GM10248 (cell line): ENCODE measurements at regions of chr6 and their contacts with region 1.

Region 1: DNA sequence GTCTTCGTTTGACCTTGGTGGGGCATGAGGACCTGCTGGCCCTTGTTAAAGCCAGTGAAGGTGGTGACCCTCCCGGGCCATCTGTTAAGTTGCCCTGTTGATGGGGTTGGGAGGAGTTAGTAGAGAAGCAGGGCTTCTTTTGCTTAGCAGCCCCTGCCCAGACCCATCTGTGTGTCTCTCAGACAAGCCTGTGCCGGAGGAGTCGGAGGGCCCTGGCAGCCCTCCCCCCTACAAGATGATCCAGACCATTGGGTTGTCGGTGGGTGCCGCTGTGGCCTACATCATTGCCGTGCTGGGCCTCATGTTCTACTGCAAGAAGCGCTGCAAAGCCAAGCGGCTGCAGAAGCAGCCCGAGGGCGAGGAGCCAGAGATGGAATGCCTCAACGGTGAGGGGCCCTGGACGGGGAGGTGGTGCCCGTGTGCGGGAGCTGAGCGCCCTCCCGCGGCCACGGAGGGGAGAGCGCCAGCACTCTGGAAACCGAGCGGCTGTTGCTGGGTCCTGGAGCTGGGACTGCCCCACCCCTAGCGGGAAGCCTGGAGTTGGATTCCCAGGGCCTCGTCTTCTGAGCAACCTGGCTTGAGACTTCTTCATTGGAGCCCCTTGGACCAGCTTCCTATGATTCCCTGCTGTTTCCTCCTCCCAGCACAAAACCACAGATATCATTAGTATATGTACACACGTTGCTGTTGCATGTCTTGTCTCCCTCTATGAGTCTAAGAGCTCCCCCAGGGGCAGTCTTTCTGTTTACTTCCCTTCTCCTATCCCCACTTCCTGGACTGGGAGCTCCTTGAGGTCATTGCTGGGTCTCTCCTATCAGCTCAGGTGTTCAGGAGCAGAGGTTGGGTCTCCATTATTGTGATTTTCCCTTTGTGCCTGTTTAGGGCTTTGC is 27.6 kb upstream of the SRF start:
- DNase-seq: peak; percentile 94
- CTCF ChIP-seq: peak; percentile 93

Region 2: DNA sequence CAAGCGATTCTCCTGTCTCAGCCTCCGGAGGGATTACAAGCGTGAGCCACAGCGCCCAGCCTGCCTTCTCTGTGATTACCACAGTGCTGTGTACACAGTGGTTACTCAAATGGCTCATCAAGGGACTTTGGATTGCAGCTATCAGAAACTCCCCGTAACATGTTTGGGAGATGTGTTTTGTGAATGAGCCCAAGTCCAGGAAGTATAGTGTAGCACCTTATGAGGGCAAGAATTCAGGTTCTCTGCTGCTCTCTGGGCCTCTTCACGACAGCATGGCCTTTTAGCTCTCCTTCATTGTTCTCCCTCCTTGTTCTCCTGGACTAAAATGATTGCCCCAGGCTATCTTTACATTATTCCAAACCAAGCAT is 298.2 kb before region 1 on chr6:
- CTCF ChIA-PET with region 1: no interaction called
- POLR2A ChIA-PET with region 1: no interaction called
- DNase-seq: no peak
- CTCF ChIP-seq: no peak

Region 3: GRCh38 chr6:42901536-42901957 is 241.9 kb before region 1 on chr6:
- CTCF ChIA-PET with region 1: interaction called, 65 read pairs
- POLR2A ChIA-PET with region 1: no interaction called
- DNase-seq: peak; percentile 58
- CTCF ChIP-seq: peak; percentile 92

Region 4: DNA sequence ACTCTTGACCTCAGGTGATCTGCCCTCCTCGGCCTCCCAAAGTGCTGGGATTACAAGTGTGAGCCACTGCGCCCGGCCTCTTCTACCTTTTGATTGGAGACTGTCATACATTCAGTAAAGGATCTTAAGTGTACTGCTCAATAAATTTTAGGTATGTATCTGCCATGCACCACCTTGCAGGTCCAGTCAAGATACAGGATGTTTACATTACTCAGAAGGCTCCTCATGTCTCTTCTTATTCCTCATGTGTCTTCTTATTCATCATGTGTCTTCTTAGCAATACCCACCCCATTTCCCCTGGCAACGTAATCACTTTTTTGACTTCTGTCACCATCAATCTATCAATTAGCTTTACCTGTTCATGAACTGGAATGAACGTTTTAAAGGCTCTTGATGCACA is 137.6 kb before region 1 on chr6:
- CTCF ChIA-PET with region 1: interaction called, 11 read pairs
- POLR2A ChIA-PET with region 1: no interaction called
- DNase-seq: no peak
- CTCF ChIP-seq: no peak

Region 5: DNA sequence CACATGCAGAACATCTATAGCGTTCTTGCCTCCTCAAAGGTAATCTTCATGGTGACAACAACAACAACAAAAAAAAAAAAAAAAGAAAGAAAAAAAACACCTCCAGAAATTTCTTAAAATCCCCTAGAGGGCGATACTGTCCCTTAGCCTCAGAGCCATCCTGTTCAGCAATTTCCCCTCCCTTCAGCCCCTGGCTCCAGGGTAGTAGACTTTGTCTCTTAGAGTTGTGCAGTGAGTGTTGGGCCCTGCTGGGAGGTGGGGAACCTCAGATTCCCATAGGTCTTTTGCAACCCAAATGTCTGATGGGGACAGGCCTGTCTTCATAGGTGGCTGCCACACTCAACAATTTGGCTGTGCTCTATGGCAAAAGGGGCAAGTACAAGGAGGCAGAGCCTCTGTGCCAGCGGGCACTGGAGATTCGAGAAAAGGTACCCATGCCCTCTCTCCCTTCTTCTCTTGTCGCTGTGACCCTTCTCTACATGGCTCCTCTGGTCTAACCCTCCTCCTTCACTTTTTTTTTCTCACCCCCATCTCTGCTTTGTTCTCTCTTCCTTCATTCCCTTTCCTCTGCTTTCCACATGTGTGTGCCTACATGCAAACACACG is 73.3 kb before region 1 on chr6:
- CTCF ChIA-PET with region 1: interaction called, 19 read pairs
- POLR2A ChIA-PET with region 1: no interaction called
- DNase-seq: peak; percentile 77
- CTCF ChIP-seq: peak; percentile 11

Region 6: DNA sequence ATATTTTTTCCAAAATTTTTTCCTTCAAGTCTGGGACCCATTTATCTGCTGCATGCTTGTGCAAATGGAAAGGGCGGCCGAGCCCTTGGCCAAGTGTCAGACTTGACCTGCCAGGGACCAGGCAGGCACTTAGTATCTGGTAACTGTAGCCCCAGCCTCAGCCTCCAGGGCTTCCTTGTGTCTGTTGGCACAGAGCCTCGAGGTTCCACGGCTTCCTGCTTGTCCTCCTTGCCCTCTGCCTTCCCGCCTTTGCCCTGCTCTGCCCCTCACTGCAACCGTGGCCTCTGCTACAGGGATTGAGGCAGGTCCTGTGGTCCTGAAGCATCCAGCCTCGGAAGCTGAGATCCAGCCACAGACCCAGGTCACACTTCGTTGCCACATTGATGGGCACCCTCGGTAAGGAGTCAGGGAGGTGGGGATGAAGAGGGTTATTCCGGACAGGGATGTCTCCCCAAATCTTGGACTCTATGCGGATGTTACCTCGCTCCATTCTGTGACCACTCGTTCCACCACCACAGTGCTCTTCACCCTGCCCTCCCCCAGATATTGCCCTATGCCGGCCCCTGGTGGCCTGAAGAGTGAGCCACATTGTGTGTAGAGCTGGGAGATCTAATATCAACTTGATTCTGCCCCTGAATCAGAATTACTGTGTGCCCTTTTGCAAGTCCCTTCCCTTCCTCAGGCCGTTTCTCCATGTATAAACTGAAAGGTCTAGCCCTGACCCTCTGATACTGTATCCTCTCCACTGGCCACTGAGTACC is 13.9 kb before region 1 on chr6:
- CTCF ChIA-PET with region 1: interaction called, 41 read pairs
- POLR2A ChIA-PET with region 1: no interaction called
- DNase-seq: peak; percentile 46
- CTCF ChIP-seq: peak; percentile 35

Region 7: GRCh38 chr6:43186019-43186418 is 42.5 kb after region 1 on chr6:
- CTCF ChIA-PET with region 1: no interaction called
- POLR2A ChIA-PET with region 1: no interaction called
- DNase-seq: no peak
- CTCF ChIP-seq: no peak

Region 8: DNA sequence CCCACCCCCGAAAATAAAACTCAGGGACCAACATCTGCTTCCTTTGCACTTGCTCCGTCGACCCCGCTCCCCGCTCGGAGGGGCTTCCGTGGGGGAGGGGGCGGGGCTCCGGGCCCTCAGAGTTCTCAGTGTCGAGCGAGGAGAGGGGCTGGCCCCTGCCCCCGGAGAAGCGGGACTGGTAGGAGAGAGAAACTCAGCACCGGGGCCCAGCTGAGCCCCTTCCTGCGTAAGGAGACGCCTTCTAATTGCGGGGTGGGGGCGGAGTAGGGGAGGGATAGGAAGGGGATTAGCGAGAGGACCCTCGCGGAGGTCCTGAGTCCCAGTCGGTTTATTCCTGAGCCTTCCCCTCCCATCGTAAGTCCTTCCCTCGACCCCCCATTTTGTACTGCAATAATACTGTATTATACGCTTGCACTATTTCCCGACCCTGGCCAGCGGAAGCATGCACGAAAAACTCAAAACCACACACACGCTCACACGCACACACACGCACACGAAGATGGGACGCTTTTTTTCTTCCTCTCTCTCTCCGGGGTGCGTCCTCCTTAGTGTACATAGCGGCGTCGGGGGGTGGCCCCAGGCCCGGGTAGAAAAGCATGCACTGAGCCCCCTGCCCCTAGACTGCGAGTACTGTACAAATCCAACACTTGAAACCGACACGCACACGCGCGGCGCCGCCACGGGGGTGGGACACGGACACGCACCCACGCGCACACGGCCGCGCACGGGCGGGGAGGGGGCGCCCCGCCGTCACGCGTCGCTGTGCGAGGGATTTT is 132.5 kb after region 1 on chr6:
- CTCF ChIA-PET with region 1: no interaction called
- POLR2A ChIA-PET with region 1: no interaction called
- DNase-seq: no peak
- CTCF ChIP-seq: no peak